Activated CD8-positive, alpha-beta T cell treated with anti-CD3 and anti-CD28 coated beads for 36 hours (primary cell): ENCODE measurements at regions of chr12 and their contacts with region 1.

Region 1: DNA sequence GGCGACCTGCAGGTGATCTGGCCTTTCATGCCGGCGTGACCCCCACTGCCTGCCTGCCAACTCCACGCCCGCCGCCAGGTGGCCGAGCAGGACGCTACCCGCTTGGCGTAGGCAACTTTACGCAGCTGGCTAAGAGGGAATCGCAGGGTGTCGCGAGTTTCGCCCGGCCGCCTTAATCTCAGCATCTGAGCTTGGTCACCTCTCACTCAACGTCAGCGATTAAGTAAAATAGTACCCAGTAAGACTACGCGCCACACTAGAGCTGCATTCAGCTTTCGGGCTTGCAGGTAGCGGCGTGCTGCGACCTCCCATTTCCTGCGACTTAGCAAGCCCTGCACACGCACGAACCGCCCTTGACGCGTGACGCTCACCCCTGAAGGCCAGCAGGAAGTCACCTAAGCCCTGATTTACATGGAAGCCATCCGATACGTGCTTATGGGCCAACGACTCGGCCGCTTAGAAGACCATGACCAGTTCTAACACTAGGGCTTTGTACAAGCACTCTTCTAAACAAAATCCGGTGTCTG is 33.2 kb downstream of the WBP11 start:
- DNase-seq: peak; percentile 94
- ATAC-seq: peak; percentile 54
- H3K4me3 Mint-ChIP-seq: peak overlapping the region; percentile 95
- H3K27ac Mint-ChIP-seq: peak overlapping the region; percentile 99
- H3K4me1 Mint-ChIP-seq: peaks cover 33% of the 10 kb centered on the region
- H3K27me3 Mint-ChIP-seq: no peaks in the 10 kb centered on the region
- CTCF ChIP-seq: peak; percentile 66

Region 2: GRCh38 chr12:14782756-14783155 is 12.7 kb after region 1 on chr12:
- CTCF ChIA-PET with region 1: interaction called, 17 read pairs
- POLR2A ChIA-PET with region 1: interaction called, 14 read pairs
- intact Hi-C with region 1: no loop called
- DNase-seq: no peak
- ATAC-seq: no peak
- H3K4me3 Mint-ChIP-seq: no peak overlapping the region
- H3K27ac Mint-ChIP-seq: no peak overlapping the region
- H3K4me1 Mint-ChIP-seq: peaks cover 10% of the 10 kb centered on the region
- H3K27me3 Mint-ChIP-seq: no peaks in the 10 kb centered on the region
- CTCF ChIP-seq: no peak

Region 3: DNA sequence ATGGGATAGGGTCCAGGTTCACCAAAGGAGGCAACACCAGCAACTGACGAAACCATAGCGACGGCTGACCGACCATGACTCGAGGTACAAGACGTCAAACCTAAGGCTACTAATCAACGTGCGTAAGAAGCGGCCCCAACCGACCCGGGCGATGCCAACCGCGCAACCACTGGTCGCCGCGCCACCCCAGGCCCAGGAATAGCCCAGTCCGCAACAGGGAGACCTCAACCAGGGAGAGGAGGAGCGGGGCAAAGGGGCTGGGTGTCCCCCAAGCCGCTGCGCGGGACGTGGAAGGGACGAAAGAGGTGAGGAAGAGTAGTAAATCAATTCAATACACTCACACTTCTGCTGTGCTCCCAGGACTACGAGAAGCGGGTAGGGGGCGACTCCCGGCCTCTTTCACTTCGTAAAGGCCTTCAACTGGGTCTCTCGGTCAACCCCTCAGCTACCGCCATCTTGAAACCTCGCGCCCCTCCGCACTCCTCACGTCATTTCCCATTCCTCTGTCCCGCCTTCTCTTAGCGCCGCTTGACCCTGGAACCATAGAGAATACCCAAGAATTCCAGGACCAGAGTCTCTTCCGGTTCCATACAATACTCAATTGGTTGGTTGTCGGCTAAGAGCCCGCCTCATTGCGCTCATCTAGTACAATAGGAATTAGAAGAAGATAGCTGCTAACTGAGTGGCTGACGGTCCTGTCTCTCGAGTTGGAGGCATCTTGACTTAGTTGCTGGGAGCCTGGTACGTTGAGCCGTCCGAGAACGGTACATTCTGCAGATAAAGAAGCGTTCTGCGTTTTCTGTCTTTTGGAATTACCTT is 33.2 kb after region 1 on chr12 and contains the starts of genes C12orf60 and WBP11:
- CTCF ChIA-PET with region 1: interaction called, 18 read pairs
- POLR2A ChIA-PET with region 1: interaction called, 33 read pairs
- intact Hi-C with region 1: loop called (anchors 1 kb)
- DNase-seq: peak; percentile 94
- ATAC-seq: peak; percentile 98
- H3K4me3 Mint-ChIP-seq: no peak within 1 kb of the TSS
- H3K27ac Mint-ChIP-seq: no peak within 1 kb of the TSS
- H3K4me1 Mint-ChIP-seq: peaks cover 37% of the 10 kb centered on the region
- H3K27me3 Mint-ChIP-seq: no peaks in the 10 kb centered on the region
- CTCF ChIP-seq: no peak
- total RNA-seq, gene C12orf60: 3.3 to 4.2 TPM
- total RNA-seq, gene WBP11: 123 to 130 TPM